HCT116 (cell line): ENCODE measurements at regions of chr17 and their contacts with region 1.

Region 1: GRCh38 chr17:54900457-54901229 is at the start of gene TOM1L1:
- DNase-seq: peak; percentile 86
- ATAC-seq: peak; percentile 98
- H3K4me3 ChIP-seq: peak within 1 kb of the TSS; percentile 76 to 90
- H3K27ac ChIP-seq: peak within 1 kb of the TSS; percentile 75
- H3K4me1 ChIP-seq: peaks cover 11 to 18% of the 10 kb centered on the region in 2 experiments; a peak in 3 of 4 replicates
- H3K27me3 ChIP-seq: no peaks in the 10 kb centered on the region
- CTCF ChIP-seq: peak in 2 of 3 experiments; percentile 22 to 25; a peak in 2 of 6 replicates
- POLR2A ChIP-seq: no peak
- RAD21 ChIP-seq: peak; percentile 31; the same call in 1 of the 2 replicates
- total RNA-seq, gene TOM1L1: 70.8 TPM

Region 2: GRCh38 chr17:54968262-54968987 is 67.8 kb after region 1 on chr17 and contains the starts of genes COX11 and STXBP4:
- CTCF ChIA-PET with region 1: no interaction called
- POLR2A ChIA-PET with region 1: interaction called, 3 read pairs
- RAD21 ChIA-PET with region 1: no interaction called
- intact Hi-C with region 1: loop called (anchors 2 kb)
- DNase-seq: peak; percentile 98
- ATAC-seq: peak; percentile 98
- H3K4me3 ChIP-seq: peak within 1 kb of the TSS; percentile 94 to 97
- H3K27ac ChIP-seq: peak within 1 kb of the TSS; percentile 73
- H3K4me1 ChIP-seq: peaks cover 3 to 16% of the 10 kb centered on the region in 2 experiments; a peak in 3 of 4 replicates
- H3K27me3 ChIP-seq: no peaks in the 10 kb centered on the region
- CTCF ChIP-seq: peak in 1 of 3 experiments; percentile 40; a peak in 3 of 6 replicates
- POLR2A ChIP-seq: peak; percentile 97
- RAD21 ChIP-seq: peak; percentile 35; the same call in 1 of the 2 replicates
- total RNA-seq, gene COX11: 62.9 TPM
- total RNA-seq, gene STXBP4: 13.6 TPM

Region 3: DNA sequence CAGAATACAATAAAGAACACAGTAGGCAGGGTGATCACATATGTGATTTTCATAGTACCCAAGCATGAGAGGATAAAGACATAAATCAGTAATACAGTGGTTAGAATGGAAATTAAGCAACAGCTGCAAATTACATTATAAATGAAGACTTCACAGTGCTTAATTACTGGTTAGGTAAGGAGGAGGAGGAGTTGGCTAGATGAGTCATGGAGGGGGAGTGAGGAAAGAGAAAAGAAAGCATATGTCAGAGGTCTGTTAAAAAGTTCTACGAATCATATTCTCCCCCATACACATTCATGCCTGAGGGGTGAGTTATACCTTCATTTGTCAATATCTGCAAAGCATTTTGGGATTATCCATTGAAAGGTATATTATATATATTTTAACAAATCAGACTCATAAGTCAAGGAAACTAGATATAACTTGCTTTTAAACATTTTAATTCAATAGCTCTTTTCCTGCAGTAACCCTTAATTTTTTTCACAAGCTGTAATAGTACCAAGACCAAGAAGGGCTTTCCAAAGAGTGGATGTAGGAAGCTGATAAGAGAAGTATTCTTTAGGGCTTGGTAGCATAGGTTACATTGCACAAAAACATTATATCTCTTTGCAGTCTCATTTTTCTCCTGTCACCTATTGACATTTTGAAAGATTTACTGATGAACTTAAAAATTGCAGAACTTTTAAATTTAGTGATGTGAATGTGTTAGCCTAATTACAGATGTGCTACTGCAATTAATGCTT is 167.2 kb after region 1 on chr17:
- CTCF ChIA-PET with region 1: no interaction called
- POLR2A ChIA-PET with region 1: no interaction called
- RAD21 ChIA-PET with region 1: no interaction called
- intact Hi-C with region 1: no loop called
- DNase-seq: no peak
- ATAC-seq: no peak; the same call in 1 of the 2 replicates
- H3K4me3 ChIP-seq: no peak overlapping the region
- H3K27ac ChIP-seq: no peak overlapping the region
- H3K4me1 ChIP-seq: peaks cover 0 to 4% of the 10 kb centered on the region in 2 experiments; a peak in 2 of 4 replicates
- H3K27me3 ChIP-seq: no peaks in the 10 kb centered on the region
- CTCF ChIP-seq: no peak
- POLR2A ChIP-seq: no peak
- RAD21 ChIP-seq: no peak